Lower leg skin (tissue), 4 donors: ENCODE measurements at regions of chr7 and their contacts with region 1.

Region 1: DNA sequence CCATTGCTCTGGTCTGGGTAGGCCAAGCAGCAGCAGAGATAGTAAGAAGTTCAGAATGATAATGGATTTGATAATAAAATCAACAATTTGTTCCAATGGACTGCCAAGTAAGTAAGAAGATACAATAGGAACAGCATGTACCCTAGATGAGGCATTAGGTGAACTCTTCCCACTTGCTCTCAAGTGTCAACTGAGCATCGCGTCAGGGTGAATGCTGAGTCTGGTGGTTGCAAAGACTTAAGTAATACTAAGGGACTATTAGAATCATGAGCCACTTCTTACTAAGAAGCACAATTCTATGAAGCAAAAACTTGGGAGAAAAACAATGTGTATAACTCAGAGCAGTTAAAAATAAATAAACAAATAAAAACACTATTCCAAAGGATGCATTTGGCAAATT is 54.5 kb downstream of the LRRN3 start:
- DNase-seq: no peak
- H3K4me3 ChIP-seq: no peak overlapping the region
- CTCF ChIP-seq: no peak
- POLR2A ChIP-seq: no peak

Region 2: GRCh38 chr7:111103678-111104274 is 41.7 kb before region 1 on chr7:
- intact Hi-C with region 1: loop called (anchors 2 kb)
- DNase-seq: no peak
- H3K4me3 ChIP-seq: no peak overlapping the region
- CTCF ChIP-seq: no peak
- POLR2A ChIP-seq: no peak